ENCODE measurements at regions of chr9 and their contacts with region 1.

Region 1: GRCh38 chr9:22244141-22245011 is 202.2 kb upstream of the DMRTA1 start:
- DNase-seq: no peak
- ATAC-seq: peak; percentile 74 to 85
- H3K4me3 ChIP-seq: peak overlapping the region; percentile 20
- H3K27ac ChIP-seq: no peak overlapping the region
- H3K4me1 ChIP-seq: no peaks in the 10 kb centered on the region
- H3K27me3 ChIP-seq: no peaks in the 10 kb centered on the region
- CTCF ChIP-seq: peak; percentile 45

Region 2: DNA sequence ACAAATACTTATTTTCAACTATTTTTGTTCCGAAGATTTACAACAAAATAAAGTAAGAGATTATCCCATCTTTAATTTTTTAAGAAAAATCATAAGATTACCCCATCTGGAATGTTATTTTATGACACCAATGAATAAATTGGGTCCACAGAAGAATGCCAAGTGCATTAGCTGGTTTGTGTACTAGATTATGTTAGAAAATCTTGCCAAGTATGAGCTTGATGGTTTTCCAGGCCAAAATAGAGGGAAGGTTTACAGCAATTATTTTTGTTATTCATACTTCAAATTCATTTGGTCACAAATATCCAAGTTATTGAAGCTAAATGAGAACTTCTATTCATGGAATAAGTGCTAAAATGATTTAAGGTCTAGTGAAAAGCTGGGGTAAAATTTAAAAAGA is 92.9 kb after region 1 on chr9:
- intact Hi-C with region 1: no loop called
- DNase-seq: no peak
- ATAC-seq: no peak
- H3K4me3 ChIP-seq: no peak overlapping the region
- H3K27ac ChIP-seq: no peak overlapping the region
- H3K4me1 ChIP-seq: no peaks in the 10 kb centered on the region
- H3K27me3 ChIP-seq: no peaks in the 10 kb centered on the region
- CTCF ChIP-seq: no peak

Region 3: DNA sequence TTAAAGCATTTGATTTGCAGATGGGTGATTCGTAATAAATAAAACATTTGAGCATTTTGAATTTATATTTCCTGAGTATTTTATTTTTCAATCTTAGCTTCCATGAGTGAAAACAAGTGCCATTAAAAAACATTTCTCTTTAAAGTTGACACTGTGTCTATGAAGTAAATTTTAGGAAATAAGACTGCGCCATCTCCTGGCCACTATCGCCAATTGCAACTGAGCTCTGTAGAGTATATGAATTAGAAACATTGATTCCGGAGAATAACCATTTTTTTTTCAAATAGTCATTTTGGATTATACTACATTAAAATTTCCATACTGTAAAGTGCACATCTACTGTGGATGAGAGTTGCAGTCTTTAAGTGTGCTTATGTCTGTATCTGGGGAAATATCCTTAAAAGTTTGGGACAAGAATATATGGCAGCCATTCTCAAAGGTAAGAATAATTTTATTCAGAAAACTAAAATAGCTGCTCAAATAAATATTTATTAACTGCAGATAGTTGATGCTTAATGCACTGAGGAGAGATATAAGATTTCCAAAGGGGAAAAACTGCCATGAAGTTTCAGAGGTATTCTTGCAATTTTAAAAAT is 208.1 kb after region 1 on chr9:
- intact Hi-C with region 1: loop called (anchors 5 kb)
- DNase-seq: peak; percentile 51
- ATAC-seq: peak; percentile 49 to 64
- H3K4me3 ChIP-seq: no peak overlapping the region
- H3K27ac ChIP-seq: no peak overlapping the region
- H3K4me1 ChIP-seq: no peaks in the 10 kb centered on the region
- H3K27me3 ChIP-seq: peaks cover 10% of the 10 kb centered on the region
- CTCF ChIP-seq: peak; percentile 87

Region 4: GRCh38 chr9:22731786-22732185 is 487.4 kb after region 1 on chr9:
- intact Hi-C with region 1: no loop called
- DNase-seq: no peak
- ATAC-seq: no peak
- H3K4me3 ChIP-seq: no peak overlapping the region
- H3K27ac ChIP-seq: no peak overlapping the region
- H3K4me1 ChIP-seq: no peaks in the 10 kb centered on the region
- H3K27me3 ChIP-seq: no peaks in the 10 kb centered on the region
- CTCF ChIP-seq: no peak